Activated CD4-positive, alpha-beta T cell treated with anti-CD3 and anti-CD28 coated beads for 36 hours (primary cell): ENCODE measurements at regions of chr1 and their contacts with region 1.

Region 1: GRCh38 chr1:156338180-156338973 is at the starts of genes CCT3 and TSACC:
- DNase-seq: peak; percentile 99
- ATAC-seq: peak; percentile 96
- H3K4me3 Mint-ChIP-seq: peak within 1 kb of the TSS; percentile 98
- H3K27ac Mint-ChIP-seq: peak within 1 kb of the TSS; percentile 96
- H3K4me1 Mint-ChIP-seq: peaks cover 29% of the 10 kb centered on the region
- H3K27me3 Mint-ChIP-seq: no peaks in the 10 kb centered on the region
- total RNA-seq, gene CCT3: 297 to 406 TPM
- total RNA-seq, gene TSACC: 0.25 to 0.83 TPM

Region 2: GRCh38 chr1:155166051-155166470 is 1172.3 kb before region 1 on chr1:
- CTCF ChIA-PET with region 1: no interaction called
- POLR2A ChIA-PET with region 1: no interaction called
- intact Hi-C with region 1: no loop called
- DNase-seq: no peak
- ATAC-seq: no peak
- H3K4me3 Mint-ChIP-seq: no peak overlapping the region
- H3K27ac Mint-ChIP-seq: no peak overlapping the region
- H3K4me1 Mint-ChIP-seq: peaks cover 17% of the 10 kb centered on the region
- H3K27me3 Mint-ChIP-seq: no peaks in the 10 kb centered on the region

Region 3: DNA sequence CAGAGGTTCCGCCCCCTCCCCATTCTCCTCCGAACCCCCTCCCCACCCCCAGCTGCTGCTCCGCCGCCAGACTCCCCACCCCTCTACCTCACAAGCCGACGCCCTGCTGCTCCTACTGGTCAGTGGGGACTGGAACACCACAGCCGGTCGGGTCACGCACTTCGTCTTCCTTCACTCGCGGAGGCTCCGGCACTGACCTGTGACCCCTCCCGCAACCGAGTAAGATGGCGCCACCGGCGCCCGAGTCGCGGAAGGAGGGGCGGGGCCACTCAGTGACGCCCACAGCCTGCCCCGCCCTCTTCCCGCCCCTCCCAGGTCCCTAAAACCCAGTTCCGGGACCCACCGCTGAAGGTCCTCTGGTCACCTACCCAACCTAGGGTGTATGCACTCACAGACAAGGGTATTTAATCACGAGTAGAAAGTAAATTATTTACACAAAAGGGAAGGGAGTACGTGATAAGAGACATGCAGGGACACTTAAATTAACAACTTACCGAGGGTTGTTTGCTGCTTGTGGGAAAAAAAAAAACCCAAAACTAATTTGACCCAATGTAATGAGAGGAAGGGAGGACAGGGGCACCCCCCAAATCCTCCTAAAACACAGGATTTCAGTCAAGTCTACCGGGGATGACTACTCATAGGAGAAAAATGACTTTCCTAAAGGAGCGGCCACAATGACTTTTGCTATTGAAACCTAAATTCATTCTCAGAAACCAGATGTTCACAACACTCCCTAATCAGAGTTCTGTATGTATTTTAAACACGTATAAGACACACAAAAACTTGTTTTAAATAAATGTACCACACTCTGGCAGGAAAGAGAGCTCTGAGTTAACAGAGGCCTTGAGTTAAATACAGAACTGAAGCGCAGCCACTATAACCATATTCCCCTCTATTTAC is 427.0 kb before region 1 on chr1 and contains the start of gene RIT1:
- CTCF ChIA-PET with region 1: no interaction called
- POLR2A ChIA-PET with region 1: no interaction called
- intact Hi-C with region 1: loop called in 1 of 2 experiments (anchors 5 kb)
- DNase-seq: peak; percentile 93
- ATAC-seq: peak; percentile 85
- H3K4me3 Mint-ChIP-seq: peak within 1 kb of the TSS; percentile 85
- H3K27ac Mint-ChIP-seq: peak within 1 kb of the TSS; percentile 92
- H3K4me1 Mint-ChIP-seq: peaks cover 19% of the 10 kb centered on the region
- H3K27me3 Mint-ChIP-seq: no peaks in the 10 kb centered on the region
- total RNA-seq, gene RIT1: 20.3 to 23.0 TPM

Region 4: DNA sequence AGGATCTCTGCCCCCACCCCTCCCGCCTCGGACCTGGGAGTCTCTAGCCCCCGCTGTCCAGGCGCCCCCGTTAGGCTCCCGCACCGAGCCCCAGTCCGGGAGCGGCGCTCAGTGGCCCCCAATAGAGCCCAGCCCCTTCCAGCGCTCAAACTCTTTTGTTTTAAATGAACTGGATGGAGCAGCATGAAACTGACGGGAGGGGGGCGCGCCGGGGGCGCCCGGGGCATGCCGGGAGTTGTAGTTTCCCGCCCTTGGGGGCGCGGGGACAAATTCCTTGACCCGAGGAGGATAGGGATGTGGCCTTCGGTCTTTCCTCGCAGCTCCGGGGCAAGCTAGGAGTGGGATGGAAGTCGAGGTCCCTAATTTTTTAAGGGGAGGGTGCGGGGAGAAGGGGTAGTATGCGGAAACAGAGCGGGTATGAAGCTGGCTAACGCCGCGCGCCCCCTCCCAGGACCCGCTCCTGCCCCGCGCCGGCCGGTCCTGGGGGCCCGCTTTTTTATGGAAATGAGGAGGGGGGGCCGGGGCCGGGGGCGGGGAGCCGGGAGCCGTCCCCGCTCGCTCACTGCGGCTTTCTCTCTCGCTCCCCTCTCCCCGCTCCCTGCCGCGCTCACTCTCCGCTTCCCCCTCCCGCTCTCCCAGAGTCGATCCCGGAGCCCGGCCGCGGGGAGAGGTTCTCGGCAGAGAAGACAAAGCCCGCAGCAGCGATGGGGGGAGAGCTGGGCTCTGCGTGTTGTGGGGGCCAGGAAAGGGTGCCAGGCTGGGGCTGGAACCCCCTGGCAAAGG is 255.9 kb before region 1 on chr1 and contains the start of gene MEX3A:
- CTCF ChIA-PET with region 1: no interaction called
- POLR2A ChIA-PET with region 1: no interaction called
- intact Hi-C with region 1: loop called in 1 of 2 experiments (anchors 1 kb)
- DNase-seq: peak; percentile 80
- ATAC-seq: peak; percentile 89
- H3K4me3 Mint-ChIP-seq: peak within 1 kb of the TSS; percentile 72
- H3K27ac Mint-ChIP-seq: no peak within 1 kb of the TSS
- H3K4me1 Mint-ChIP-seq: peaks cover 5% of the 10 kb centered on the region
- H3K27me3 Mint-ChIP-seq: peaks cover 26% of the 10 kb centered on the region
- total RNA-seq, gene MEX3A: 0.48 to 0.79 TPM

Region 5: DNA sequence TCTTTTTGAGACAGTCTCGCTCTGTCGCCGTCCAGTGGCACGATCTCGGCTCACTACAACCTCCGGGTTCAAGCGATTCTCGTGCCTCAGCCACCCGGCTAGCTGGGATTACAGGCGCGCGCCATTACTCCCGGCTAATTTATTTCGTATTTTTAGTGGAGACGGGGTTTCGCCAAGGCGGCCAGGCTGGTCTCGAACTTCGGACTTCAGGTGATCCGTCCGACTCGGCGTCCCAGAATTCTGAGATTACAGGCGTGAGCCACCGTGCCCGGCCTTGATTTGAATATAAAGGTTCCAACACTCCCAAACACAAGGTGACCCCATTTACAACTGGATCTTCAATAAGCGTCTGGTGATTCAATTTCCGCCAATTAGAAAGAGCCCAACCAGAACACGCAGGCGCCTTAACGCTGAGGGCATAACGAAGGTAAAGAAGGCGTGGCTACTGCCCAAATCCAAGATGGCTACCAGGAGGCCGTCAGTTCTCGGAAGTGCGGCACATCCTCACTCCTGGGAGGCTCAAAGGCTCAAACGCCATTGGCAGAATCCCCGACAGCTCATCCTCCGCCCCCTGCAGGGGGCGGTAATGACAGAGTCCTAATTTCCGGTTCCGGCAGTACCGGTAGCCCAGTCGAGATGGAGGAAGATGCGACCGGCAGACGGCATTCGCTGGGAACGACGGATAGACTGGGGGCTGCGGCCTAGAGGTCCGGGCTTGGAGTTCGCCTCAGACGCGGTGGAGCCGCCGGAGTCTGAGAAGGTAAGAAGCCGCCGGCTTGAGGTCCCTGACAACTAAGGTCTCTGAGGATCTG is 144.7 kb before region 1 on chr1 and contains the start of gene SLC25A44:
- CTCF ChIA-PET with region 1: interaction called, 4 read pairs
- POLR2A ChIA-PET with region 1: no interaction called
- intact Hi-C with region 1: loop called in 1 of 2 experiments (anchors 1 kb)
- DNase-seq: peak; percentile 98
- ATAC-seq: peak; percentile 96
- H3K4me3 Mint-ChIP-seq: peak within 1 kb of the TSS; percentile 100
- H3K27ac Mint-ChIP-seq: peak within 1 kb of the TSS; percentile 97
- H3K4me1 Mint-ChIP-seq: peaks cover 43% of the 10 kb centered on the region
- H3K27me3 Mint-ChIP-seq: no peaks in the 10 kb centered on the region
- total RNA-seq, gene SLC25A44: 42.4 to 51.9 TPM

Region 6: GRCh38 chr1:156456622-156457465 is 118.5 kb after region 1 on chr1:
- CTCF ChIA-PET with region 1: no interaction called
- POLR2A ChIA-PET with region 1: no interaction called
- intact Hi-C with region 1: loop called in 1 of 2 experiments (anchors 1 kb)
- DNase-seq: peak; percentile 99
- ATAC-seq: peak; percentile 88
- H3K4me3 Mint-ChIP-seq: peak overlapping the region; percentile 79
- H3K27ac Mint-ChIP-seq: peak overlapping the region; percentile 98
- H3K4me1 Mint-ChIP-seq: peaks cover 22% of the 10 kb centered on the region
- H3K27me3 Mint-ChIP-seq: no peaks in the 10 kb centered on the region